ENCODE measurements at regions of chr20 and their contacts with region 1.

Region 1: GRCh38 chr20:51306503-51307358 is 235.8 kb downstream of the NFATC2 start:
- DNase-seq: peak; percentile 65 to 82
- ATAC-seq: peak; percentile 80 to 99 (median 95)
- H3K4me3 ChIP-seq: no peak overlapping the region
- H3K4me3 Mint-ChIP-seq: no peak overlapping the region
- H3K27ac ChIP-seq: no peak overlapping the region
- H3K27ac Mint-ChIP-seq: no peak overlapping the region
- H3K4me1 ChIP-seq: peaks cover 6% of the 10 kb centered on the region
- H3K4me1 Mint-ChIP-seq: no peaks in the 10 kb centered on the region
- H3K27me3 ChIP-seq: peaks cover 2% of the 10 kb centered on the region
- H3K27me3 Mint-ChIP-seq: peaks cover 15 to 19% of the 10 kb centered on the region in 2 donors
- CTCF ChIP-seq: peak; percentile 89

Region 2: GRCh38 chr20:50790651-50791277 is 516.0 kb before region 1 on chr20:
- intact Hi-C with region 1: loop called (anchors 1 kb)
- DNase-seq: peak; percentile 67 to 88
- ATAC-seq: peak; percentile 54 to 58 (median 56)
- H3K4me3 ChIP-seq: peak overlapping the region; percentile 23
- H3K4me3 Mint-ChIP-seq: peak overlapping the region; percentile 42
- H3K27ac ChIP-seq: peak overlapping the region; percentile 81
- H3K27ac Mint-ChIP-seq: peak overlapping the region in 1 of 2 donors; percentile 69
- H3K4me1 ChIP-seq: peaks cover 25% of the 10 kb centered on the region
- H3K4me1 Mint-ChIP-seq: peaks cover 5 to 13% of the 10 kb centered on the region in 2 donors
- H3K27me3 ChIP-seq: no peaks in the 10 kb centered on the region
- H3K27me3 Mint-ChIP-seq: peaks cover 0 to 5% of the 10 kb centered on the region in 2 donors
- CTCF ChIP-seq: peak; percentile 59

Region 3: DNA sequence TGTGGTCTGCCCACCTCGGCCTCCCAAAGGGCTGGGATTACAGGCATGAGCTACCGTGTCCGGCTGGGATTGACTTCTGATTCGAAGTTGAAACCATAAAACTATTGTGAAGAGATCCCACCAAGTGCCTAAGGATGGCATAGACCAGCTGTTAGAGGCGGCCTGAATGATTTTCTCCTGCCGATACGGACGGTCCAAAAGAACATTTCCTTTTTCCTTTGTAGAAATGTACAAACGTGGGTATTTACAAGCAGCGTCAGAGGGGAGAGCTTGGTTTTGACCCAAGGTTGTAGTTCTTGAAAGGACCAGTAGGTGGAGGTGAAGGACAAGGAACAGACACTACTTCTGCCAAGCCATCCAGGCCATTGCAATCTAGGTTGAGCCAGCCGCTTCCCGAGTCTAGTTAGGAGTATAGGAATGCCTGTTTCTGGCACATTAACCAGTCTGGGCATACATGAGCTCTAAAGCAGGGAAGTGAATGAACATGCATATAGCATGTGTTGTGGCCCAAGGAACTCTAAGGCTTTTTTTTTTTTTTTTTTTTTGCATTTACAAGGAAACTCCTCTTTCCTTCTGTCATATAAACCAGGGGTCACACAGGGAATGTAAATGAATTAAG is 319.0 kb before region 1 on chr20:
- intact Hi-C with region 1: loop called (anchors 1 kb)
- DNase-seq: peak; percentile 31 to 89
- ATAC-seq: peak; percentile 86 to 100 (median 99)
- H3K4me3 ChIP-seq: no peak overlapping the region
- H3K4me3 Mint-ChIP-seq: no peak overlapping the region
- H3K27ac ChIP-seq: no peak overlapping the region
- H3K27ac Mint-ChIP-seq: no peak overlapping the region
- H3K4me1 ChIP-seq: peaks cover under 1% of the 10 kb centered on the region
- H3K4me1 Mint-ChIP-seq: no peaks in the 10 kb centered on the region
- H3K27me3 ChIP-seq: no peaks in the 10 kb centered on the region
- H3K27me3 Mint-ChIP-seq: peaks cover 18 to 21% of the 10 kb centered on the region in 2 donors
- CTCF ChIP-seq: peak; percentile 84

Region 4: GRCh38 chr20:51220293-51220706 is 86.4 kb before region 1 on chr20:
- intact Hi-C with region 1: loop called (anchors 1 kb)
- DNase-seq: peak; percentile 55 to 64
- ATAC-seq: peak; percentile 75 to 87 (median 77)
- H3K4me3 ChIP-seq: no peak overlapping the region
- H3K4me3 Mint-ChIP-seq: no peak overlapping the region
- H3K27ac ChIP-seq: no peak overlapping the region
- H3K27ac Mint-ChIP-seq: no peak overlapping the region
- H3K4me1 ChIP-seq: no peaks in the 10 kb centered on the region
- H3K4me1 Mint-ChIP-seq: peaks cover 5 to 9% of the 10 kb centered on the region in 2 donors
- H3K27me3 ChIP-seq: peaks cover 6% of the 10 kb centered on the region
- H3K27me3 Mint-ChIP-seq: peaks cover 34 to 59% of the 10 kb centered on the region in 2 donors
- CTCF ChIP-seq: peak; percentile 84

Region 5: GRCh38 chr20:51237278-51237677 is 69.5 kb before region 1 on chr20:
- intact Hi-C with region 1: no loop called
- DNase-seq: no peak
- ATAC-seq: no peak
- H3K4me3 ChIP-seq: no peak overlapping the region
- H3K4me3 Mint-ChIP-seq: no peak overlapping the region
- H3K27ac ChIP-seq: no peak overlapping the region
- H3K27ac Mint-ChIP-seq: no peak overlapping the region
- H3K4me1 ChIP-seq: no peaks in the 10 kb centered on the region
- H3K4me1 Mint-ChIP-seq: no peaks in the 10 kb centered on the region
- H3K27me3 ChIP-seq: no peaks in the 10 kb centered on the region
- H3K27me3 Mint-ChIP-seq: peaks cover 14 to 21% of the 10 kb centered on the region in 2 donors
- CTCF ChIP-seq: no peak

Region 6: DNA sequence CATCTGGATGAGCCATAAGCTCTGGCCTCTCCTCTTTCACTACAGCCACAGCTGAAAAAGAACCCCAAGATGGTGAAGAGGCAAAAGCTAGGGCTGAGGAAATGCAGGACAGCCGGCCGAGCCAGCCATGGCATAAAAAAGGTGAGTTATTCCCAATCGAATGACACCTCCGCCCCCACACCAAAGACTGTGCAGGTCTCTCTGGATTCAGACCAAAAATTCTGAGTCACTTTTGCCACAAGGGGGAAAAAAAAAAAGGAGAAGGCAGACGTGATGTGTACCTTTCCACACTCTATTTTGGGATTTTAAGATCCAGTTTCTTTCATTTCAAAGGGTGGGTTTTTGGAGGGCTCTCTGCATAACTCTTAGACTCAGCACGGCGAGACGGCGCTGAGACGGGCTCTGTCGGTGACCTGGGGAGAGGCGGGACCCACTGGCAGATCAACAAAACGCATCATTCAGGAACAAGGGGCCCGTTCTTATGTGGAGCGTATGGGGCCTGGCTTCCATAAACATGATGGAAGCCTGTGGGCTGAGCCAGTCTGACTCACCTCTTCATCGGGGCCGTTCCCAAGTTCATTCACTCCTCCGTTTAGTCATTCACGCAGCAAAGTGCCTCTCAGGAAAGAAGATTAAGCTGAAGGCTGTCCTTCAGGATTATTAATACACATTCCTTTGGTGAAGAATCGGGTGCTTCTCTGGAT is 181.0 kb after region 1 on chr20:
- intact Hi-C with region 1: no loop called
- DNase-seq: no peak
- ATAC-seq: no peak
- H3K4me3 ChIP-seq: no peak overlapping the region
- H3K4me3 Mint-ChIP-seq: no peak overlapping the region
- H3K27ac ChIP-seq: no peak overlapping the region
- H3K27ac Mint-ChIP-seq: peak overlapping the region; percentile 95 to 99
- H3K4me1 ChIP-seq: peaks cover 41% of the 10 kb centered on the region
- H3K4me1 Mint-ChIP-seq: peaks cover 91 to 94% of the 10 kb centered on the region in 2 donors
- H3K27me3 ChIP-seq: no peaks in the 10 kb centered on the region
- H3K27me3 Mint-ChIP-seq: no peaks in the 10 kb centered on the region
- CTCF ChIP-seq: no peak

Measured in natural killer cell (primary cell).